Calu3 (cell line): ENCODE measurements at regions of chr3 and their contacts with region 1.

Region 1: DNA sequence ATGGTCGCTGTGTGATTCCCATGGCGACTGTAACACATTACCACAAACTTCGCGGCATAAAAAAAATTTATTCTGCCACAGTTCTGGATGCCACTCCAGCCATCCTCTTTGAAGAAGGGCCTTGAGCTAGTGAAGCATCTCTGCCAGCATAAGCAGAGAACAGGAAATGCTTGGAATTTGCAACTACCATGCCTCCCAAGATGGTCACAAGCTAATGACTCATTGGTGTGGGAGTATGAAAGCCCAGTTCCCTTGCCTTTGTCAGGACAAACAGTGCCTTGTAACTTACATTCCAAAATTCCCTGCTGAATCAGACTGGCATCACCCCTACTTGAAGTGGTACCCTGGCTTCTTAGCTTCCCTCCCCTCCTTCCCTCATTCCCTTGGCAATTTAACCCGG is 129.7 kb downstream of the PROS1 start:
- DNase-seq: peak; percentile 15
- H3K4me3 Mint-ChIP-seq: no peak overlapping the region
- H3K27ac Mint-ChIP-seq: no peak overlapping the region
- H3K4me1 Mint-ChIP-seq: no peaks in the 10 kb centered on the region
- H3K27me3 Mint-ChIP-seq: no peaks in the 10 kb centered on the region
- CTCF ChIP-seq: no peak

Region 2: GRCh38 chr3:94062431-94063404 is 218.7 kb after region 1 on chr3 and contains the starts of genes DHFR2 and NSUN3:
- CTCF ChIA-PET with region 1: no interaction called
- intact Hi-C with region 1: loop called (anchors 2 kb)
- DNase-seq: peak; percentile 86
- H3K4me3 Mint-ChIP-seq: peak within 1 kb of the TSS; percentile 94
- H3K27ac Mint-ChIP-seq: peak within 1 kb of the TSS; percentile 98
- H3K4me1 Mint-ChIP-seq: peaks cover 17% of the 10 kb centered on the region
- H3K27me3 Mint-ChIP-seq: no peaks in the 10 kb centered on the region
- CTCF ChIP-seq: no peak
- total RNA-seq, gene DHFR2: 5.0 and 5.4 TPM in 2 replicates
- total RNA-seq, gene NSUN3: 10.1 and 13.6 TPM in 2 replicates

Region 3: DNA sequence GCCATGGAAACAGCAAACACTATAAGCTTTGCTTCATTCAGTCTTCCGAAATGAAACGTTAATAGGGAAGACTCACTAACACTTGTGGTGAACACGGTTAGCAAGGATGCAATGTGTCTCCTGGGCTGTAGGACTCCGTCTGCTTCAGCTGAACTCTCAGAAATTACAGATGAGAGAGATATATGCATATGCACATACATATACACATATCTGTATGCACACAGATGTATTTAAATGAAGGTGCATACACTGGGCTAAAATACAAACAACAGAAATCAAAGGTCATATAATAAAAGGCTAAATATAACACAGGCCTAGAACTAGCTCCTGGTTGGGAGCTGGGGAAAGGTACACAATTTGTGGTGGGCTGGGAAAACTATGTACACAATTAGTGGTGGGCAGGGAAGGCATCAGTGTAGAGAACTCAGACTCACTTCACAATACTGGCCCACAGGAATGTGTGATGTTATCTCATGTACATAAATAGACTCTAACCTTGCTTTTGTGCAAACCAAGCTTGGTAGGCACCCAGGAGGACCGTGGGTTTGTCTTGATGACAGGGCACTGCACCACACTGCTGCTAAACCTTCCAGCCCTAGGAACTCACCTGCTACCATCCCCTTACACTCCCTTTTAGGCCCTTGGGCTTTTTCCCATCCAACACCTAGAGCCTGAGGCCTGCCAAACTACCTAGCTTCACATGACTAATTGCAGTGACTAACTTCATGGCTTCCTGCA is 1092.0 kb after region 1 on chr3:
- CTCF ChIA-PET with region 1: no interaction called
- intact Hi-C with region 1: no loop called
- DNase-seq: no peak
- H3K4me3 Mint-ChIP-seq: no peak overlapping the region
- H3K27ac Mint-ChIP-seq: no peak overlapping the region
- H3K4me1 Mint-ChIP-seq: peaks cover 10% of the 10 kb centered on the region
- H3K27me3 Mint-ChIP-seq: no peaks in the 10 kb centered on the region
- CTCF ChIP-seq: no peak